A673 (cell line): ENCODE measurements at regions of chr22 and their contacts with region 1.

Region 1: DNA sequence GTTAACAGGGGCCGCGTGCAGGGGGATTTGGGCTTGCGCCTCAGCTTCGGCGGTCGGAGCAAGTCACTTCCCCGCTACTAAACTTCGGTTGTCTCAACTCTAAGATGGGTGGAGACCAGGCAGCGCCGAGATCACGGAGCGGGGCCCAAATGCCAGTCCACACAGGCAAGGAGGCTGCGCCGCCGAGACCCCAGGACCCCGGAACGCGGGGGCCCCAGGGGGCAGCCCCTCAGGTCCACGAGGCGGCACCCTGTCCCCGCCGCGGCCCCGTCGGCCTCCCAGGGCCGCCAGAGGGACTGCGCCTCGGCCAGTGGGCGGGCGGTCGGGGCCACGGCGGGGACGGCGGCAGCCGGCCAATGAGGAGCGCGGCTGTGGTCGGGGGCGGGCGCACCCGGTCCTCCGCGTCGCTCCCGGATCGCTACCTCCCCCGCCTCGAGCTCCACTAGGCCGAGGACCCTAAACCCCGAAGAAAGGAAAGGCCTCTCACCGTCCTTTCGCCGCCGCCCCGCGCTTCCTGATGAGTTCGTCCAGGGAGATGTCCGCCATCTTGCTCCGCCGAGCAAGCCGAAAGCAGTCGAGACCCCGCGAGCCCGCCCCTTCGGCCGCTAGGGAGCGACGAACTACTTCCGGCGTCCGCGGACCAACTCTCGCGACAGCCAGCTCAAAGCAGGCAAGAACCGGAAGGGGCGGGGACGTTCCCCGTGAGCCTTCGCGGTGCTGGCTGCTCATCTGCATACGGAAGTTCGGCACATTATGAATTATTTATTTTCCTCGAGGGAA is at the start of gene POLDIP3:
- DNase-seq: peak; percentile 98
- H3K4me3 ChIP-seq: peak within 1 kb of the TSS; percentile 77
- H3K27ac ChIP-seq: peak within 1 kb of the TSS; percentile 97
- H3K4me1 ChIP-seq: peaks cover 41% of the 10 kb centered on the region
- H3K27me3 ChIP-seq: no peaks in the 10 kb centered on the region
- CTCF ChIP-seq: no peak; the same call in 1 of the 2 replicates
- total RNA-seq, gene POLDIP3: 131 and 134 TPM in 2 replicates

Region 2: DNA sequence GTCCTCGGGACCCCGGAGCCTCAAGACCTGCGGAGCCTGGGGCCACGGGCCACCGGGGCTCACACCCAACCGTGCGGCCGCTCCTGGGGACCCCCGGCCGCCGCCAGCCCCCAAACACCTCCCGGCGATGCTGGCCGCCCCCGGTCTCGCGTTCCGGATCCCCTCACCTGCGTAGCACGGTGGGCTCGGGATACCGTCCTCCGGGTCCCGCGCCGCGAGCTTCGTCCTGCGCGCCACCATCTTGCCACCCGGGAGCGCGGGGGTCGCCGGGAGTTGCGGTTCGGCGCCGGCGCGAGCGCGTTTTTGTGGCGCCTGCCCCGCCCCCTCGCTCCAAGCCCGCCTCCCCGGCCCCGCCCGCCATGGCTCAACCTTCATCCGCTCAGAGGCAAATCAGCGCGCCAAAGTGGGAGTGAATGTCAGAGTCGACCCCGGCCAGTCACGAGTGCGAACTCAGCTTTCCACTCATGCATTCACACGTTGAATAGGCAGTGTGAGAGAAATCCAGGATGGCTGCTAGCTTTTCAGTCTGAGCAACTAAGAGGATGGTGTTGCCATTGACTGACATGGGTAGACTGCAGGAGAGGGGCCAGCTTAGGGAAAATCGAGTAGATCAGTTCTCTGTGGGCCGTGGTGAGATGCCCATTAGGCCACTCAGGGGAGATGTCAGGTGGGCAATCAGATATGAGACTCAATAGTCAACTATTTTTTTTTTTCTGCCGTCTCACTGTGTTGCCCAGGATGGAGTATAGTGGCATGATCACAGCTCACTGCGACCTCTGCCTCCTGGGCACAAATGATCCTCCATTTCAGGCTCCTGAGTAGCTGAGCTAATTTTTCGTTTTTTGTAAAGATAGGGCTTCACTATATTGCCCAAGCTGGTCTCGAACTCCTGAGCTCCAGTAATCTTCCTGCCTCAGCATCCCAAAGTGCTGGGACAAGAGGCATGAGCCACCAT is 32.5 kb before region 1 on chr22:
- CTCF ChIA-PET with region 1: no interaction called
- POLR2A ChIA-PET with region 1: interaction called, 10 read pairs
- intact Hi-C with region 1: loop called (anchors 2 kb)
- DNase-seq: peak; percentile 89
- H3K4me3 ChIP-seq: peak overlapping the region; percentile 74
- H3K27ac ChIP-seq: peak overlapping the region; percentile 81
- H3K4me1 ChIP-seq: peaks cover 5% of the 10 kb centered on the region
- H3K27me3 ChIP-seq: no peaks in the 10 kb centered on the region
- CTCF ChIP-seq: no peak

Region 3: DNA sequence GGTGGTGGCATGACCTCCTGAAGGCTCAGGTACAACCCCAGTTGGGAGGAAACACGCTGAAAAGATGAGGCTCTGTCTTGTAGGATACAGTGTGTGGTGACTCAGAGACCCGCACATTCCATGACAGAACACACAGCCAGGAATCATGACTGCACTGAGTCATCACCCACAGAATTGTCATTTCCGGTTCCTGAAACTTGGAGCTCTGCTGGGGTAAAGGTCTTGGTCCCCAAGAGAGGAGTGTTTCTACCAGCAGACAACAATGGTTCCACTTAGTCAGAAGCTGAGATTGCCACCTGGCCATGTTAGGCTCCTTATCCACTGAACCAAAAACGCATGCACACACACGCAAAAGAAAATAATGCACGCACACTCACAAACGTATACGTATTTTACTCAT is 66.1 kb after region 1 on chr22:
- CTCF ChIA-PET with region 1: no interaction called
- POLR2A ChIA-PET with region 1: no interaction called
- intact Hi-C with region 1: no loop called
- DNase-seq: peak; percentile 57
- H3K4me3 ChIP-seq: no peak overlapping the region
- H3K27ac ChIP-seq: no peak overlapping the region
- H3K4me1 ChIP-seq: peaks cover 4% of the 10 kb centered on the region
- H3K27me3 ChIP-seq: no peaks in the 10 kb centered on the region
- CTCF ChIP-seq: no peak

Region 4: GRCh38 chr22:43377896-43378704 is 763.6 kb after region 1 on chr22:
- CTCF ChIA-PET with region 1: no interaction called
- POLR2A ChIA-PET with region 1: no interaction called
- intact Hi-C with region 1: no loop called
- DNase-seq: no peak
- H3K4me3 ChIP-seq: no peak overlapping the region
- H3K27ac ChIP-seq: no peak overlapping the region
- H3K4me1 ChIP-seq: no peaks in the 10 kb centered on the region
- H3K27me3 ChIP-seq: peaks cover 35% of the 10 kb centered on the region
- CTCF ChIP-seq: no peak